Posterior cingulate gyrus (tissue), 11 donors: ENCODE measurements at regions of chr17 and their contacts with region 1.

Region 1: GRCh38 chr17:40075201-40075941 is 12.6 kb downstream of the THRA start:
- DNase-seq: peak in 8 of 10 donors; percentile 74 to 96 (median 86)

Region 2: DNA sequence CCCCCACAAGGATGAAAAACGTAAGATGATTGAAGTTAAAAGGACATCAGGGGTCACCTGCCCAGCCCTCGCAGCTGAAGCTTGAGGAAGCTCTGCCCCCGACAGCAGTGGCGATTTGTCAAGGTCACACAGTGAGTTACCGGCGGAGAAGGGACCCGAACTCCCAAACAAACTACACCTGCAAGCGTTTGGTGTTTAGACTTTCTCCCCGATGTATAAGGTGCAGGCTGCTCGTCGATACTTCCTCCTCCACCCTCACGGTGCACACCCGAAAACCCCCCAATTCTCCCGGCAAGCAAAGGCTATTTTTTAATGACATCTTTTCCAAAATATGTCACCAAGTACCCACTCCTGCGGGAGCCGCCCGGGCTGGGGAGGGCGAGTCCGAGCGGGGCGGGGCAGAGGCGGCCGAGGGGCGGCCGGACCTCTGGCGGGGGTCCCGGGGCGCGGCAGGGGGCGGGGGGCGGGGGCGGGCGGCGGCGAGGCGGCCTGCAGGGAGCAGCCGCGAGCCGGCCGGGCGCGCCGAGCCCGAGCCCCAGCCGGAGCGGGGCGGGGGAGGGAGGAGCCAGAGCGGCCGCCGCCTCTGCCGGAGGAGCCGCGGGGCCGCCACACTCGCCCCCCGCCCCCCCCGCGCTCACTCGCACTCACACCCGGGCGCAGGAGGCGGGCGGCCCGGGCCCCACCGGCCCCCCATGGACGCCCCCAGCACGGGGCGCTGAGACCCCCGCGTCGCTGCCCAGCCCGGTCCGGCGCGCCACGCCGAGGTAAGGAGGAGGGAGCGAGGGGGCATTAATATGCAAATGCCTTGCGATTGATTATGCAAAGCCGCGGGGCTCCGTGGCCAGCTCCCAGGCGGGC is 12.8 kb before region 1 on chr17 and contains the start of gene THRA:
- intact Hi-C with region 1: loop called (anchors 1 kb)
- DNase-seq: peak in 8 of 10 donors; percentile 63 to 96 (median 79)